Stomach (tissue), 19 donors: ENCODE measurements at regions of chr7 and their contacts with region 1.

Region 1: GRCh38 chr7:24819916-24820689 is 62.8 kb upstream of the GSDME start:
- DNase-seq: peak; percentile 84 to 94
- H3K4me3 ChIP-seq: no peak overlapping the region
- H3K27ac ChIP-seq: peak overlapping the region in 4 of 5 donors; percentile 55 to 76 (median 68)
- H3K4me1 ChIP-seq: peaks cover 13 to 27% (median 19%) of the 10 kb centered on the region in 4 donors
- H3K27me3 ChIP-seq: no peaks in the 10 kb centered on the region
- CTCF ChIP-seq: peak in 5 of 7 experiments; percentile 70 to 83 (median 76)
- EP300 ChIP-seq: no peak
- POLR2A ChIP-seq: no peak

Region 2: DNA sequence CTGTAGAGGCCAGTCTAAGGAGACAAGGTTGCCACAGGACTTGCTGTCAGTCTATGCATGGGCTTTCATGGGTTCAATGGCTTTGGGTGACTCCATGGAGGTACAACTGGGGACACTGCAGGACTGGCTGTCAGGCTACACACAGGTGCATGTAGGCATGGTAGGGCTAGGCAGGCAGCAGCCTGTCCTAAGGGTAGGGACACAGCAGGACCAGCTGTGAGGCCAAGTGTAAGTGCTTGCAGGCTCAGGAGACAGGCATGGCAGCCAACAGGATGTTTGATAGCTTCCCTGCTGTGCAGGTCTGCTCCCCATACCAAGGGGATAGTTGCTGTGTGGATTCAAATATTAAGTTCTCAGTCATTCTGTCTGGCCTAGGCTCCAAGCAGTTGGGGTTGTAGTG is 717.1 kb before region 1 on chr7:
- intact Hi-C with region 1: no loop called
- DNase-seq: no peak
- H3K4me3 ChIP-seq: no peak overlapping the region
- H3K27ac ChIP-seq: no peak overlapping the region
- H3K4me1 ChIP-seq: no peaks in the 10 kb centered on the region
- H3K27me3 ChIP-seq: no peaks in the 10 kb centered on the region
- CTCF ChIP-seq: no peak
- EP300 ChIP-seq: no peak
- POLR2A ChIP-seq: no peak

Region 3: GRCh38 chr7:24521917-24522620 is 298.0 kb before region 1 on chr7:
- intact Hi-C with region 1: no loop called
- DNase-seq: no peak
- H3K4me3 ChIP-seq: no peak overlapping the region
- H3K27ac ChIP-seq: no peak overlapping the region
- H3K4me1 ChIP-seq: no peaks in the 10 kb centered on the region
- H3K27me3 ChIP-seq: peaks cover 0 to 11% (median 7%) of the 10 kb centered on the region in 3 donors
- CTCF ChIP-seq: no peak
- EP300 ChIP-seq: no peak
- POLR2A ChIP-seq: no peak

Region 4: DNA sequence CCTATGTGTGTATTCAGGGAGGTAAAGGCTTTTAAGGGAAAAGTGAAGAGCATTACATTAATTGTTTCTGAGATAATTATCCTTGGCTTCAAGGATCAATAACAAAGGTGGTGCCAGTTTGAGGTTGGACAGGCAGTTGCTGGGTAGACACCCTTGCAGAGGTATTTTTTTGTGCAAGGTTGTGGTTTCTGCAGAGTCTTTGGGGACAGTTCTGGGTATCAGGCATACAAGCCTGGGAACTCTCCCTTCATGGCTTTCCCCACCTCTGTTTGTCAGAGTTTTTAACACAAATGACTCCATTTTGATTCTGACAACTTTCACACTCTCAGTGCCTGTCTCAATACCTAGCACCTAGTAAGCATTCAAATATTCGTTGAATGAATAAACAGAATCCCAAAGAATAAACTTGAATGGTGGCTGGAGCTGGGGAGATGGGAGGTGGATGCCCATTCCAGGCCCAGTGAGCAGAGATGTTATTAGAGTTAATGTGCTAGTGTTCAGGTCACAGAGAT is 167.3 kb after region 1 on chr7:
- intact Hi-C with region 1: loop called (anchors 5 kb)
- DNase-seq: no peak
- H3K4me3 ChIP-seq: no peak overlapping the region
- H3K27ac ChIP-seq: no peak overlapping the region
- H3K4me1 ChIP-seq: peaks cover 0 to 6% (median under 1%) of the 10 kb centered on the region in 4 donors
- H3K27me3 ChIP-seq: no peaks in the 10 kb centered on the region
- CTCF ChIP-seq: no peak
- EP300 ChIP-seq: no peak
- POLR2A ChIP-seq: no peak

Region 5: GRCh38 chr7:25054819-25055519 is 234.9 kb after region 1 on chr7:
- intact Hi-C with region 1: no loop called
- DNase-seq: no peak
- H3K4me3 ChIP-seq: no peak overlapping the region
- H3K27ac ChIP-seq: no peak overlapping the region
- H3K4me1 ChIP-seq: no peaks in the 10 kb centered on the region
- H3K27me3 ChIP-seq: peaks cover 0 to 13% (median 0%) of the 10 kb centered on the region in 3 donors
- CTCF ChIP-seq: no peak
- EP300 ChIP-seq: no peak
- POLR2A ChIP-seq: no peak

Region 6: GRCh38 chr7:25069900-25070443 is 249.9 kb after region 1 on chr7:
- intact Hi-C with region 1: loop called (anchors 5 kb)
- DNase-seq: peak; percentile 45 to 90
- H3K4me3 ChIP-seq: peak overlapping the region; percentile 26 to 41 (median 34)
- H3K27ac ChIP-seq: no peak overlapping the region
- H3K4me1 ChIP-seq: peaks cover 7 to 11% (median 9%) of the 10 kb centered on the region in 4 donors
- H3K27me3 ChIP-seq: no peaks in the 10 kb centered on the region
- CTCF ChIP-seq: peak in 6 of 7 experiments; percentile 33 to 95 (median 87)
- EP300 ChIP-seq: no peak
- POLR2A ChIP-seq: no peak